Transverse colon (tissue), 4 donors: ENCODE measurements at regions of chr9 and their contacts with region 1.

Region 1: GRCh38 chr9:134698587-134699342 is 57.2 kb downstream of the COL5A1 start:
- DNase-seq: peak; percentile 66
- H3K4me3 ChIP-seq: no peak overlapping the region
- H3K27ac ChIP-seq: peak overlapping the region in 3 of 4 donors; percentile 20 to 53 (median 23)
- H3K4me1 ChIP-seq: peaks cover 3 to 12% (median 8%) of the 10 kb centered on the region in 4 donors
- H3K27me3 ChIP-seq: no peaks in the 10 kb centered on the region
- CTCF ChIP-seq: peak; percentile 81 to 92 (median 87)
- EP300 ChIP-seq: no peak
- POLR2A ChIP-seq: no peak

Region 2: DNA sequence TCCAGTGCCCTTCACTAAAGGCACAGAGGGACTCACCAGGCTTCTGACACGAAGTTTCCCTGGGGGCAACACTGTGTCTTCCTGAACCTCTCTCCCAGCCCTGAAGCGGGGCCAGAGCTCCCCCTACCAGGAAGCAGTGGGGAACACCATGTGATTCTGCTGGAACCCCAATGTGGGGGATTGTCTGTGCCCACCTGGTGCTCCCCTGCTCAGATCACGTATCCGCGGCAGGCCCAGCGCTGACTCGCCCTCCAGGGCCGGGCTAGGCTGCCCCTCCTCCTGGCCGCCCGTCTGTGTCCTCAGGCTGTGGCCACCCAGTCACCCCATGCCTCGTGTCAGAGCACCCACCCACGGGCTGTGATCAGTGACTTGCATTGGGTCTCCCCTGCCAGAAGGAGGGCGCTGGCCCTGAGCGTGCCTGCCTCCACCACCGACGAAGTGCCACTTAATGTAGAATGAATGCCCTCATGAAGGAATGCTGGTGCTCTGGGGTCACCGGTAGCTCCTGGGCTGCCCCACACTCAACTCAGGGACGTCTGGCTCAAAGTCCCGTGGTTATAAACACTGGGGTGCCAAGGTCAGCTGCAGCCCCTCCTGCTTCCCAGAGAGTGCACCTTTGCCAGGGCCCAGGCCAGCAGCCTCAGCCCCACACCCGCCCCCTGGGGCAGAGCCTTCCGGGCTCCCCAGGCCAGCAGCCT is 982.8 kb before region 1 on chr9:
- in situ Hi-C with region 1: no loop called
- intact Hi-C with region 1: no loop called
- DNase-seq: no peak
- H3K4me3 ChIP-seq: no peak overlapping the region
- H3K27ac ChIP-seq: peak overlapping the region in 2 of 4 donors; percentile 19 to 21
- H3K4me1 ChIP-seq: no peaks in the 10 kb centered on the region
- H3K27me3 ChIP-seq: peaks cover 3% of the 10 kb centered on the region
- CTCF ChIP-seq: peak in 1 of 5 experiments; percentile 10
- EP300 ChIP-seq: no peak
- POLR2A ChIP-seq: no peak

Region 3: GRCh38 chr9:133979273-133979920 is 719.4 kb before region 1 on chr9:
- in situ Hi-C with region 1: no loop called
- intact Hi-C with region 1: no loop called
- DNase-seq: no peak
- H3K4me3 ChIP-seq: peak overlapping the region in 1 of 4 donors; percentile 20
- H3K27ac ChIP-seq: peak overlapping the region; percentile 0 to 57 (median 19)
- H3K4me1 ChIP-seq: peaks cover under 1 to 16% (median 10%) of the 10 kb centered on the region in 4 donors
- H3K27me3 ChIP-seq: no peaks in the 10 kb centered on the region
- CTCF ChIP-seq: no peak
- EP300 ChIP-seq: no peak
- POLR2A ChIP-seq: no peak

Region 4: DNA sequence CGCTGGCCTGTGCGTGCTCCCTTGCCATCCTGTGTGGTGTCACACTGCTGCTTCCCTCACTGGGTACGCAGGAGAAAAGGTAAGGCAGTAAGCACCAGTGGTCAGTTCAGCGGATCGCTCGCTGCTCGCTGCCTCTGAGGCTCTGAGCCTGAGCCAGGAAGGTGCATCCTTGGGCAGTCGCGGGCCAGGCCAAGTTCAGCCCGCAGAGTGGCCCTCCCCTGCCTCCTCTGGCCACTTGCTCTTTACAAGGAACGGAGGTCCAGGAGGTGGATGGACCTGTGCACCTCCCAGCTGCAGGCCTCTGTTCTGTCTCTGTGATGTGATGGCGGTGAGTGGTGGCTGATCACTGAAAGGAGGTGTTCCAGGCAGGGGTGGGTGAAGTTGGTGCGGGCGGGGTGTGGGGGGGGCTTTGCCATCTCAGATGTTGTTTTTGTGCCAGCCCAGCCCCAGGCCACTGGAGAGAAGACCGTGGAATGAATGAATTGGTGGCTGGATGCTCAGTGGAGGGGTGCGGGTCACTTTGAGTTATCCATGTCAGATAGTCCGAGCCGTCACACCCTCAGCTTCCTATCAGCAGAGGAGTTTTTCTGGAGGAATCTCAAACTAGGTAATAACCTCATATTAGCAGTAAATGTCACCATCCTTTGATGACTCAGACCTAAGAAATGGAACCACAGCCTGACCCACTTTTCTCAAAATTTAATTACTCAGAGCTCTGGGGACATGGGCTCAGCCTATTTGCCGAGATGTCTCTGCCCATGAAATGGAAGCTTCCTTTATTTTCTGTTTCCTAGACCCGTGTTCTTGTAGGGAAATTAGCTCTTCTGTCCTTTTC is 49.8 kb before region 1 on chr9:
- in situ Hi-C with region 1: no loop called
- intact Hi-C with region 1: no loop called
- DNase-seq: no peak
- H3K4me3 ChIP-seq: no peak overlapping the region
- H3K27ac ChIP-seq: peak overlapping the region; percentile 82 to 96 (median 90)
- H3K4me1 ChIP-seq: peaks cover 23 to 46% (median 34%) of the 10 kb centered on the region in 4 donors
- H3K27me3 ChIP-seq: no peaks in the 10 kb centered on the region
- CTCF ChIP-seq: no peak
- EP300 ChIP-seq: no peak
- POLR2A ChIP-seq: no peak

Region 5: DNA sequence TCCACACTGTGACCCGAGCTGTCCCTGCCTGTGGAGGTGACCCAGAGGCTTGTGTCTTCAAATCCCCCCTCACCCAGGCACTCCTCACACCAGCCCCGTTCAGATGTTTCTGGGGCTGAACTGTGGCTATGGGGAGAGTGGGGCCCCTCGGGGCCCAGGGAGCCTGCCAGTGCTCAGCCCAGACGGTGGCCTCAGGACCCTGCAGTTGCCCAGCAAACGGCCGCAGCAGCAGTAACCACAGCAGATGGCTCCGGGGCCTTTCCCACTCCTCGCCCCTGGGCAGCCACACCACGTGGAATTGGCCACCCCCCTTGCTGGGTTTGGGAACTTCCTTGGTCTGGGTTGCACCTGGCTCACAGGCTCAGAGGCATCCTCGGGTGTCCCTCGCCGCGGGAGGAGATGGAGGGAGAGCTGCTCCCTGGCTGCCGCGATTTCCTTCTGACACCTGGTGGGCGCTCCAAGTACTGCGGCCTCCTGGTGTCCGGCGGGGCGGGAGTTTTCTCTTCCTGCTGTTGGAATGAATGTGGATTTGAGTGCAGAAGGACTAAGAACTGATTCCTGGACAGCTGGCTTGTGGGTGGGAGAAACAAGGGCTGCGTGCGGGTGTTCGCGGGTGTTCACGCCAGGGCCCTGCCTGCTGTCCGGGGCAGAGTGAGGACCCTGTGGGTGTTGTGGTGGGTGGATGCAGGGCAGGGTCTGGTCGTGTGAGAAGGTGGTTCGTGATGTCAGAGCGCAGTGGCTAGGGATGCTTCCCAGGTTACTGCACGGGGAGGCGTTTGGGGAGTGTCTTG is 40.3 kb after region 1 on chr9:
- in situ Hi-C with region 1: no loop called
- intact Hi-C with region 1: loop called (anchors 1 kb)
- DNase-seq: peak; percentile 63
- H3K4me3 ChIP-seq: no peak overlapping the region
- H3K27ac ChIP-seq: peak overlapping the region in 2 of 4 donors; percentile 13
- H3K4me1 ChIP-seq: peaks cover 7 to 14% (median 13%) of the 10 kb centered on the region in 4 donors
- H3K27me3 ChIP-seq: no peaks in the 10 kb centered on the region
- CTCF ChIP-seq: peak; percentile 78 to 87 (median 86)
- EP300 ChIP-seq: no peak
- POLR2A ChIP-seq: no peak

Region 6: DNA sequence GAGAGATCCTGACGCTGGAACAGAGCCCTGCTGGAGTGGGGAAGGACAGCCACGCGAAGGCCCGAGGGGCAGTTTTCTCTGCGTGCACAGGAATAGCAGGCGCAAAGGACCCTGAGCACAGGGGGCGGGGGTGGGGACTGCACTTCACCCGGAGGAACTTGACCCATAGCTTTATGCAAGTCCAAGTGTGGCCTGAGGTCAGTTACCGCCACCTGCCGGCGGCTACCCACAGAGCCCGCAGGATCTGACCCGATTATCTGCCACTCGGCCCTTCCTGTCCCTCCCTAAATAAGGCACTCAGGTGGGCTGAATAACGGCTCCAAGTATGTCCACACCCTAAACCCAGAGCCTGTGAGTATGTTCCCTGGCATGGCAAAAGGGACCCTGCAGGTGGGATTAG is 284.3 kb after region 1 on chr9:
- in situ Hi-C with region 1: loop called in 1 of 4 experiments (anchors 25 kb)
- intact Hi-C with region 1: no loop called
- DNase-seq: no peak
- H3K4me3 ChIP-seq: no peak overlapping the region
- H3K27ac ChIP-seq: no peak overlapping the region
- H3K4me1 ChIP-seq: no peaks in the 10 kb centered on the region
- H3K27me3 ChIP-seq: no peaks in the 10 kb centered on the region
- CTCF ChIP-seq: peak in 3 of 5 experiments; percentile 17 to 35 (median 34)
- EP300 ChIP-seq: no peak
- POLR2A ChIP-seq: no peak